CD8-positive, alpha-beta memory T cell (primary cell): ENCODE measurements at regions of chr15 and their contacts with region 1.

Region 1: DNA sequence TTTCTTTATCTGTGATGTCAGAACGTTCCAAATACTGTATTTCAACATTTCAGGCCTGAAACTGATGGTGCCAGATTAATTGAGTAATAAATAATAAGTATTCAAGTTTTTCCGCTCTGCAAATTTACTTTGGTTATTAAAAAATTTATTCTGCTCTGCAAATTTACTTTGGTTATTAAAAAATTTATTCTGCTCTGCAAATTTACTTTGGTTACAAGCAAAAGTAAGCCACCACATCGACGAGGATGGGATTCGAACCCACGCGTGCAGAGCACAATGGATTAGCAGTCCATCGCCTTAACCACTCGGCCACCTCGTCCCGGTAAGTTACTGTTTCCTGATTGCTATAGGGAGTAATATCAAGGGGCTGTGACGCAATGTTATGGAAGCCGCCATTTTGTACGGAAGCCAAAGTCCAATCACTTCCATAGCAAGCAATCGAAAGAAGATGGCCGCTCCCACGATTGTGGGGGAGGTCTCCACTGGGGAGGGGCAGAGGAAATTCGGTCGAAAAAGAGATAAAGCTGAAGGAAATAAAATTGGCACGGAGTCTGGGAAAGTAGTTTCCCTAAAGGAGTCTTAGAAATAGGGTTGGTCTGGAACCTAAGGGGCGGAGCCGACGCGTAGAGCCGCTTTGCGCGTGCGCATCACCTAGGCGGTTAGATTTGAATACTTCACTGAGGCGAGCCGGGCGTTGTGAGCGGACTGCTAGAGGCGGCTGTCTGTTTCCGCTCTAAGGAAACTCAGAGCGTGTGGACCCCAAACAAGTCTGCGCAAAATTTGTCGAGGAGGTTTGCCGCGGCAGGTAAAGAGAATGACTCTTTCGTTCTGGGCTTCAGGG is at the start of gene KNL1:
- DNase-seq: peak; percentile 81 to 92 (median 89)
- H3K4me3 ChIP-seq: peak within 1 kb of the TSS; percentile 84
- H3K4me3 Mint-ChIP-seq: peak within 1 kb of the TSS; percentile 93 to 97 (median 95)
- H3K27ac ChIP-seq: peak within 1 kb of the TSS; percentile 90
- H3K27ac Mint-ChIP-seq: peak within 1 kb of the TSS; percentile 95 to 100 (median 98)
- H3K4me1 ChIP-seq: peaks cover 8% of the 10 kb centered on the region
- H3K4me1 Mint-ChIP-seq: peaks cover 33 to 41% (median 37%) of the 10 kb centered on the region in 3 donors
- H3K27me3 ChIP-seq: no peaks in the 10 kb centered on the region
- H3K27me3 Mint-ChIP-seq: peaks cover 2 to 7% of the 10 kb centered on the region in 2 donors
- total RNA-seq, gene KNL1: 19.2 to 19.5 TPM

Region 2: GRCh38 chr15:40564591-40565332 is 29.0 kb before region 1 on chr15 and contains the start of gene CCDC32:
- CTCF ChIA-PET with region 1: interaction called, 20 read pairs
- POLR2A ChIA-PET with region 1: interaction called, 15 read pairs
- DNase-seq: peak; percentile 93 to 97 (median 94)
- H3K4me3 ChIP-seq: peak within 1 kb of the TSS; percentile 100
- H3K4me3 Mint-ChIP-seq: peak within 1 kb of the TSS; percentile 87 to 97 (median 95)
- H3K27ac ChIP-seq: peak within 1 kb of the TSS; percentile 99
- H3K27ac Mint-ChIP-seq: peak within 1 kb of the TSS; percentile 88 to 100 (median 98)
- H3K4me1 ChIP-seq: peaks cover 20% of the 10 kb centered on the region
- H3K4me1 Mint-ChIP-seq: peaks cover 33 to 72% (median 65%) of the 10 kb centered on the region in 3 donors
- H3K27me3 ChIP-seq: no peaks in the 10 kb centered on the region
- H3K27me3 Mint-ChIP-seq: peaks cover 0 to 5% of the 10 kb centered on the region in 2 donors
- total RNA-seq, gene CCDC32: 31.4 to 34.9 TPM

Region 3: GRCh38 chr15:40660686-40661085 is 66.9 kb after region 1 on chr15:
- CTCF ChIA-PET with region 1: no interaction called
- POLR2A ChIA-PET with region 1: no interaction called
- DNase-seq: no peak
- H3K4me3 ChIP-seq: no peak overlapping the region
- H3K4me3 Mint-ChIP-seq: no peak overlapping the region
- H3K27ac ChIP-seq: no peak overlapping the region
- H3K27ac Mint-ChIP-seq: no peak overlapping the region
- H3K4me1 ChIP-seq: no peaks in the 10 kb centered on the region
- H3K4me1 Mint-ChIP-seq: no peaks in the 10 kb centered on the region
- H3K27me3 ChIP-seq: no peaks in the 10 kb centered on the region
- H3K27me3 Mint-ChIP-seq: no peaks in the 10 kb centered on the region